ENCODE measurements at regions of chr4 and their contacts with region 1.

Region 1: DNA sequence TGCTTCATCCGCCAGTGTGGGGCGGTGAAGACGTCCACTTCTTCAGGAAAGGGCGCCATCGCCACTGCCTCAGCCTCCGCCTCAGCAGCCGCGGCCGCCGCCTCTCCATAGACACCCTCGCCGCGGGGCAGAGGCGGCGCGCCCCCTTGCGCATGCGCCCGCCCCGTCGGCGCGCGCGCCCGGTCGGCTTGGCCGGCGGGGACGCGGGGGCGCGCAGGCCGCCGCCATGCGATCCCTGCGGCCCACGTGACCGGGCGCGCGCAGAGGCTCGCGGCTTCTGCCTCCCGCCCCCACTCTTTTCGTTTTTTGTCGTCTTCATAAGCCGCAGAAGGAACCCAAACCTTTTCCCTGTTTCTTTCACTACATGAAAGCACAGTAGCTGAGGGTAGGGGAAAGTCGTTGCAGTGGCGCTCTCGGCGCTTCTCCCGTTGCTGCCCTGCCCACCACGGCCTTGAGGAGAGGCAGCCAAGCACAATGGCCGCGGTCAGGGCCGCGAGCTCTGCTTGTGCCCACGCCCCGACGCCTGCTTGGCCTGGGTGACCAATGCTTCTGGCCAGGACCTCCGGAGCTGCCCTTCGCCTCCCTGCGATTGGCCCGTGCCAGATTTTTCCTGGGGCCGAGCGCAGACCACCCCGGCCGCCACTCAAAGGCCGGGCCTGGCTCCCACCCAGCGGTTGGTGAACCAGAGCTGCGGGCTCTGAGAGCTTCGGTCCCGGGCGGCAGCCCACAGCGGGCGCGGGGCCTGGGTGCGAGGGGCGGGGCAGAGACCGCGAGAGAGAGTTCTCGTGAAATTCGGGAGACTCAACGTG is at the start of gene FBXL5:
- DNase-seq: peak; percentile 72
- H3K4me3 ChIP-seq: peak within 1 kb of the TSS; percentile 72 to 79
- H3K27ac ChIP-seq: peak within 1 kb of the TSS; percentile 99
- H3K4me1 ChIP-seq: peaks cover 4% of the 10 kb centered on the region
- H3K27me3 ChIP-seq: no peaks in the 10 kb centered on the region
- CTCF ChIP-seq: peak in 1 of 4 experiments; percentile 19
- POLR2A ChIP-seq: peak; percentile 83
- total RNA-seq, gene FBXL5: 86.0 to 123 TPM

Region 2: GRCh38 chr4:15592799-15593198 is 62.6 kb before region 1 on chr4:
- intact Hi-C with region 1: loop called (anchors 5 kb)
- DNase-seq: no peak
- H3K4me3 ChIP-seq: no peak overlapping the region
- H3K27ac ChIP-seq: no peak overlapping the region
- H3K4me1 ChIP-seq: no peaks in the 10 kb centered on the region
- H3K27me3 ChIP-seq: no peaks in the 10 kb centered on the region
- CTCF ChIP-seq: no peak
- POLR2A ChIP-seq: no peak

Region 3: DNA sequence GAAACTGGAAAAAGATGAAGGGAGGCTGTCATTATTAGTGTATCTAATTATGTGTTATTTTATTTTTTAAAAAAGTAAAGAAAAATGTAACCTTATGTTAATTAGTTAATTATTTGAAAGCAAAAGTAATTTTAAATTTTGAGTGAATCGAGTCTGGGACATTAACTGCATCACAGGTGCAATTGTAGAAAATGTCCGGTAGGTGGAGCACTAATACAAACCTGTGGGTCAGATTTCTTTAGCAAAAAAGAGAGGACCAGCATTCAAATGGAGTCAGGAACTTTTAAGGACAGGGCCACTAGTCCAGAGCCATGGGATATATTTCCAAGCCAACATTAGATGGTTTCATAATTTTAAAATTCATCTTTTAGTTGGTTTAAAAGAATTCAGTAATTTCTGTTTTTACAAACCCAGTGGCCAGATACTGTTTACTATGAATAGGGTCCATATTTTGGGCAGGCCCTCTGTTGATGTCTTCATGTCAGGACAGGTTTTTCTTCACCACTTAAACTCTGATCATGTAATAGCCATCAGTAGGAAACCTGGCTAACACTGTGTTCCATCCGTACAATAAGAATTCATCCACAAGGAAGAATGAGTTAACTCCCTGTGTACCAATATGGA is 74.6 kb after region 1 on chr4:
- intact Hi-C with region 1: no loop called
- DNase-seq: peak; percentile 27
- H3K4me3 ChIP-seq: no peak overlapping the region
- H3K27ac ChIP-seq: no peak overlapping the region
- H3K4me1 ChIP-seq: no peaks in the 10 kb centered on the region
- H3K27me3 ChIP-seq: no peaks in the 10 kb centered on the region
- CTCF ChIP-seq: peak; percentile 71 to 83 (median 78)
- POLR2A ChIP-seq: no peak